T-cell (primary cell): ENCODE measurements at regions of chr7 and their contacts with region 1.

Region 1: GRCh38 chr7:151085329-151085690 is 965 bp upstream of the AGAP3 start:
- DNase-seq: no peak
- ATAC-seq: no peak
- H3K4me3 ChIP-seq: peak overlapping the region in 1 of 2 donors; percentile 57
- H3K4me3 Mint-ChIP-seq: peak overlapping the region; percentile 74 to 89 (median 84)
- H3K27ac ChIP-seq: no peak overlapping the region
- H3K27ac Mint-ChIP-seq: peak overlapping the region; percentile 75 to 83
- H3K4me1 ChIP-seq: peaks cover 17 to 74% of the 10 kb centered on the region in 2 experiments
- H3K4me1 Mint-ChIP-seq: peaks cover 42 to 51% (median 51%) of the 10 kb centered on the region in 3 donors
- H3K27me3 ChIP-seq: peaks cover 0 to 22% of the 10 kb centered on the region in 2 experiments
- H3K27me3 Mint-ChIP-seq: peaks cover 4 to 11% of the 10 kb centered on the region in 2 donors

Region 2: GRCh38 chr7:151168003-151168786 is 82.9 kb after region 1 on chr7:
- CTCF ChIA-PET with region 1: no interaction called
- POLR2A ChIA-PET with region 1: interaction called in 1 of 2 experiments, 12 read pairs
- DNase-seq: peak in 32 of 35 experiments; percentile 13 to 78 (median 48)
- ATAC-seq: peak; percentile 74 to 80 (median 78)
- H3K4me3 ChIP-seq: peak overlapping the region; percentile 16 to 59
- H3K4me3 Mint-ChIP-seq: peak overlapping the region; percentile 66 to 80 (median 70)
- H3K27ac ChIP-seq: no peak overlapping the region
- H3K27ac Mint-ChIP-seq: no peak overlapping the region
- H3K4me1 ChIP-seq: peaks cover 3 to 21% of the 10 kb centered on the region in 2 experiments
- H3K4me1 Mint-ChIP-seq: peaks cover 14 to 19% (median 17%) of the 10 kb centered on the region in 3 donors
- H3K27me3 ChIP-seq: peaks cover 24 to 56% of the 10 kb centered on the region in 2 experiments
- H3K27me3 Mint-ChIP-seq: peaks cover 35 to 47% of the 10 kb centered on the region in 2 donors